Activated CD4-positive, alpha-beta T cell treated with anti-CD3 and anti-CD28 coated beads for 36 hours (primary cell): ENCODE measurements at regions of chr15 and their contacts with region 1.

Region 1: GRCh38 chr15:22952796-22953579 is 27.2 kb downstream of the CYFIP1 start:
- DNase-seq: no peak
- ATAC-seq: no peak
- H3K4me3 Mint-ChIP-seq: no peak overlapping the region
- H3K27ac Mint-ChIP-seq: no peak overlapping the region
- H3K4me1 Mint-ChIP-seq: peaks cover 12% of the 10 kb centered on the region
- H3K27me3 Mint-ChIP-seq: peaks cover 12% of the 10 kb centered on the region

Region 2: GRCh38 chr15:22251422-22251821 is 701.6 kb before region 1 on chr15:
- CTCF ChIA-PET with region 1: no interaction called
- POLR2A ChIA-PET with region 1: no interaction called
- intact Hi-C with region 1: no loop called
- DNase-seq: no peak
- ATAC-seq: no peak
- H3K4me3 Mint-ChIP-seq: no peak overlapping the region
- H3K27ac Mint-ChIP-seq: no peak overlapping the region
- H3K4me1 Mint-ChIP-seq: peaks cover 16% of the 10 kb centered on the region
- H3K27me3 Mint-ChIP-seq: peaks cover 28% of the 10 kb centered on the region

Region 3: DNA sequence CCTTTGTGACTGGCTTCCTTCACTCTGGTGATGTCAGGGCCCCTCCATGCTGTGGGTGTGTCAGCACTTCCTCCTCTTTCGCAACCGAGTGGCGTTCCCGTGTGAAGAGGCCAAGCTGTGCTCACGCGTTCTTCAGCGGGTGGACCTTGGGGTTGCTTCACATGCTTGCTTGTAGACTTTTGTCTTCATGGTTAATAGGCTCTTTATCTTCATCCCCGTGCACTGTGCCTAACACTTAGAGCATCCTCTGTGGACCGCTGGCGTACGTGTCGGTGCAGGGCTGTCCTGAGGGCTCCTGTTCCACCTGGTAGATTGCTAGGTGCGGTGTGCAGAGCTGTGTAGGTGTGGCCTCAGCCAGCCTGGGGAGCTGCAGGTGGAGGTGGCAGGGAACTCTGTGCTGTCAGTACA is 690.4 kb before region 1 on chr15:
- CTCF ChIA-PET with region 1: no interaction called
- POLR2A ChIA-PET with region 1: no interaction called
- intact Hi-C with region 1: no loop called
- DNase-seq: peak; percentile 67
- ATAC-seq: no peak
- H3K4me3 Mint-ChIP-seq: no peak overlapping the region
- H3K27ac Mint-ChIP-seq: no peak overlapping the region
- H3K4me1 Mint-ChIP-seq: peaks cover 23% of the 10 kb centered on the region
- H3K27me3 Mint-ChIP-seq: peaks cover 5% of the 10 kb centered on the region

Region 4: GRCh38 chr15:23003736-23004135 is 50.7 kb after region 1 on chr15:
- CTCF ChIA-PET with region 1: no interaction called
- POLR2A ChIA-PET with region 1: no interaction called
- intact Hi-C with region 1: loop called in 1 of 2 experiments (anchors 5 kb)
- DNase-seq: no peak
- ATAC-seq: no peak
- H3K4me3 Mint-ChIP-seq: no peak overlapping the region
- H3K27ac Mint-ChIP-seq: no peak overlapping the region
- H3K4me1 Mint-ChIP-seq: no peaks in the 10 kb centered on the region
- H3K27me3 Mint-ChIP-seq: no peaks in the 10 kb centered on the region

Region 5: DNA sequence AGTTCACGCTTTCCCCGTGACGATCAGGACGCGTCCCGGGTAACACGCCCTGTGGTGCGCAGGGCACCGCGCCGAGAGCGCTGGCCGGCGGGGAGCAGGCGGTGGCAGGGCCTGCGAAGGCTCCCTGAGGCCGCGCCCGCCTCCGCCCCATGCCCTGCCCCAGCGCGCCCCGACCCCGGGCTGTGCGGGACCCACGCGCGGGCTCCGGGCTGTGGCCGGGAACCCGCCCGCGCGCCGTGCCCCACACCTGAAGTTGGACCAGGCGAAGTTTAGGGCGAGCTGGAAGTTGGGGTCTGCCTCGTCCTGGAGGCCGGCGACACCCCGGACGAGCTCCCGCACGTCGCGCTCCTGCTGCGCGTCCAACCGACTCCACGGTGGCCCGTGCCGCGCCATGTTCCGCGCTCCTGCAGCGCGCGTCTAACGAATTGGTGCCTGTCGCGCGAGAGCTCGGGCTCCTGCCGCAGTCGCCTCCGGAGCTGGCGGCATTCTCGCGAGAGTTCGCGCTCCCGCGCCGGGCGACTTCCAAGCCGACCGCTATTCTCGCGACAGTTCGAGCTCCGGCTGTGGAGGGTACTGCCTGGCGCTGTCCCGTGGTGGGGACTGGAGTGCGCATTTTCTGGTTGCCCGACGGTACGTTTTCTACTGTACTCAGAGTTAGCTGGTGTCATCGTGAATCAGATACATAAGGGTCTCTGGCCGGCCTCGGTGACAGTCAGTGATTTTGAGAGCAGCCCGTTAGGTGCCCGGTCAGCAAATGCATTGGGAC is 86.3 kb after region 1 on chr15 and contains the start of gene TUBGCP5:
- CTCF ChIA-PET with region 1: no interaction called
- POLR2A ChIA-PET with region 1: no interaction called
- intact Hi-C with region 1: no loop called
- DNase-seq: peak; percentile 99
- ATAC-seq: peak; percentile 97
- H3K4me3 Mint-ChIP-seq: peak within 1 kb of the TSS; percentile 81
- H3K27ac Mint-ChIP-seq: peak within 1 kb of the TSS; percentile 91
- H3K4me1 Mint-ChIP-seq: peaks cover 13% of the 10 kb centered on the region
- H3K27me3 Mint-ChIP-seq: no peaks in the 10 kb centered on the region
- total RNA-seq, gene TUBGCP5: 16.2 to 16.4 TPM